Mammary epithelial cell (primary cell): ENCODE measurements at regions of chr13 and their contacts with region 1.

Region 1: DNA sequence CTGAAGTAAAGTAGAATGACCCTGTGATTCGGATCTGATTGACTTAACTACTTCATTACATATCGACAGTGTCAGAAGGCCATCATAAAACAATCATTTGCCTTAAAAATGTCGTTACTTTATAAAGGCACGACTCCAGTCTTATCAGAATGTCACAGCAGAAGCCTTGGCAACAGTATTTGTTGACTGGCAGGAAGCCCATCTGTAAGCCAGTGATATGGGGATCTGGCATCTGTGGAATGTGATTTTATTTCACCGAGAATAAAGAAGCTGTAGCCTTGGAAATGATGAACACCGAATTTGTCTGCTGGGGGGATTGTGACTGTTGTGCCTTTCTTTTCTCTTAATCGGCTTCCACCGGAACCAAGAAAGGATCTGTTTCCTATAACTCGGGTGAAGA is 362.5 kb downstream of the TDRD3 start:
- DNase-seq: no peak
- H3K4me3 ChIP-seq: no peak overlapping the region
- H3K27ac ChIP-seq: peak overlapping the region; percentile 68
- H3K4me1 ChIP-seq: peaks cover 5% of the 10 kb centered on the region
- H3K27me3 ChIP-seq: no peaks in the 10 kb centered on the region
- CTCF ChIP-seq: no peak

Region 2: GRCh38 chr13:60617991-60618733 is 141.3 kb before region 1 on chr13:
- CTCF ChIA-PET with region 1: no interaction called
- dilution Hi-C with region 1: no loop called
- in situ Hi-C with region 1: no loop called
- intact Hi-C with region 1: no loop called
- DNase-seq: no peak
- H3K4me3 ChIP-seq: no peak overlapping the region
- H3K27ac ChIP-seq: no peak overlapping the region
- H3K4me1 ChIP-seq: no peaks in the 10 kb centered on the region
- H3K27me3 ChIP-seq: peaks cover 6% of the 10 kb centered on the region
- CTCF ChIP-seq: peak in 1 of 2 donors; percentile 39

Region 3: GRCh38 chr13:60661521-60661920 is 98.0 kb before region 1 on chr13:
- CTCF ChIA-PET with region 1: no interaction called
- dilution Hi-C with region 1: no loop called
- in situ Hi-C with region 1: no loop called
- intact Hi-C with region 1: no loop called
- DNase-seq: no peak
- H3K4me3 ChIP-seq: no peak overlapping the region
- H3K27ac ChIP-seq: no peak overlapping the region
- H3K4me1 ChIP-seq: no peaks in the 10 kb centered on the region
- H3K27me3 ChIP-seq: peaks cover 2% of the 10 kb centered on the region
- CTCF ChIP-seq: no peak

Region 4: GRCh38 chr13:60990032-60990733 is 230.7 kb after region 1 on chr13:
- CTCF ChIA-PET with region 1: no interaction called
- dilution Hi-C with region 1: no loop called
- in situ Hi-C with region 1: no loop called
- intact Hi-C with region 1: loop called (anchors 1 kb)
- DNase-seq: no peak
- H3K4me3 ChIP-seq: no peak overlapping the region
- H3K27ac ChIP-seq: no peak overlapping the region
- H3K4me1 ChIP-seq: no peaks in the 10 kb centered on the region
- H3K27me3 ChIP-seq: no peaks in the 10 kb centered on the region
- CTCF ChIP-seq: peak; percentile 12 to 55